ENCODE measurements at regions of chr19 and their contacts with region 1.

Region 1: GRCh38 chr19:46932346-46932745 is 71.5 kb downstream of the ARHGAP35 start:
- DNase-seq: no peak
- ATAC-seq: no peak
- H3K4me3 ChIP-seq: no peak overlapping the region
- H3K27ac ChIP-seq: peak overlapping the region in 7 of 12 donors; percentile 9 to 37 (median 19)
- H3K4me1 ChIP-seq: peaks cover 6 to 83% (median 61%) of the 10 kb centered on the region in 12 donors
- H3K27me3 ChIP-seq: no peaks in the 10 kb centered on the region
- CTCF ChIP-seq: no peak
- POLR2A ChIP-seq: no peak

Region 2: GRCh38 chr19:46913852-46914430 is 18.4 kb before region 1 on chr19:
- intact Hi-C with region 1: no loop called
- DNase-seq: no peak
- ATAC-seq: no peak
- H3K4me3 ChIP-seq: peak overlapping the region in 1 of 12 donors; percentile 8
- H3K27ac ChIP-seq: peak overlapping the region in 10 of 12 donors; percentile 22 to 78 (median 44)
- H3K4me1 ChIP-seq: peaks cover 0 to 69% (median 22%) of the 10 kb centered on the region in 12 donors
- H3K27me3 ChIP-seq: no peaks in the 10 kb centered on the region
- CTCF ChIP-seq: no peak
- POLR2A ChIP-seq: no peak

Region 3: GRCh38 chr19:46975925-46976782 is 43.8 kb after region 1 on chr19:
- intact Hi-C with region 1: loop called in 3 of 10 experiments (anchors 5 to 10 kb)
- DNase-seq: peak; percentile 91 to 97 (median 95)
- ATAC-seq: peak; percentile 88 to 93 (median 91)
- H3K4me3 ChIP-seq: peak overlapping the region in 2 of 12 donors; percentile 0 to 19
- H3K27ac ChIP-seq: peak overlapping the region; percentile 80 to 95 (median 90)
- H3K4me1 ChIP-seq: peaks cover 22 to 92% (median 71%) of the 10 kb centered on the region in 12 donors
- H3K27me3 ChIP-seq: no peaks in the 10 kb centered on the region
- CTCF ChIP-seq: no peak
- POLR2A ChIP-seq: peak in 1 of 2 donors; percentile 14